IMR-90 (cell line): ENCODE measurements at regions of chr1 and their contacts with region 1.

Region 1: GRCh38 chr1:110412576-110412975 is 5.1 kb upstream of the LAMTOR5 start:
- DNase-seq: peak; percentile 63
- ATAC-seq: peak; percentile 84
- H3K4me3 ChIP-seq: no peak overlapping the region
- H3K27ac ChIP-seq: no peak overlapping the region
- H3K4me1 ChIP-seq: peaks cover 2% of the 10 kb centered on the region; the same call in 1 of the 2 replicates
- H3K27me3 ChIP-seq: peaks cover 14% of the 10 kb centered on the region
- CTCF ChIP-seq: peak; percentile 75
- POLR2A ChIP-seq: no peak
- RAD21 ChIP-seq: peak; percentile 79

Region 2: DNA sequence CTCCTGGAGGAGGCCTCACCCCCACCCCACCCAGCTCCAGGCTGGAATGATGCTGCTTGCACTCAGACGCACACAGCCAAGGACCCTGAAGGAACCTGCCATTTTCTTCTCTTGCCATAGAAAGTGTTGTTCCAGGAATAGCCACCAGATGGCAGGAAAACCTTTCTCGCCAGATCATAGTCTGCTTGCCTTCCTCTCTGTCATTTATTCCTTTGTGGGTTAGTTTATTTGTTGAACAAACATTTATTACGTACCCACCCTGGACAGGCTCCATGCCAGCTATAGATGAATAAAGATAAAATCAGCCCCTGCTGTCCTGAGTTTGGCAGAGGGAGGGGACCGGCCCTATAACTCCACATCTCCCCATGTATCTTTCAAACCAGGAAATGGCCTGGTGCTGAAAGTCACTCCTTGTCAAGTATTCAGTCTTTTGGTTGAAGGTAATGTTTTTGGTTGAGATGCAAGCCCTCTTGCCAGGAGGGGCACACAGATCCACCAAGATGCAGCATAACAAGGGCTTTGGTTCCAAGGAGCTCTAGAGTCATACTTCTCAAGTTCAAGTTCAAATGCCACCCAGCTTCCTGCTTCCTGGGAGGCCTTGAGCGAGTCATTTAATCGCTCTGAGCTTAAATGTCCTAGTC is 209.4 kb before region 1 on chr1:
- CTCF ChIA-PET with region 1: interaction called, 7 read pairs
- POLR2A ChIA-PET with region 1: no interaction called
- dilution Hi-C with region 1: no loop called
- in situ Hi-C with region 1: loop called (anchors 10 kb)
- intact Hi-C with region 1: loop called (anchors 2 kb)
- DNase-seq: peak; percentile 66
- ATAC-seq: peak; percentile 86
- H3K4me3 ChIP-seq: no peak overlapping the region
- H3K27ac ChIP-seq: no peak overlapping the region
- H3K4me1 ChIP-seq: 0 out of 2 replicates have a peak, but pooled peaks cover 1% of the 10 kb centered on the region
- H3K27me3 ChIP-seq: no peaks in the 10 kb centered on the region; the same call in 1 of the 2 replicates
- CTCF ChIP-seq: peak; percentile 85
- POLR2A ChIP-seq: no peak
- RAD21 ChIP-seq: peak; percentile 87

Region 3: GRCh38 chr1:110209715-110210603 is 202.6 kb before region 1 on chr1 and contains the start of gene KCNC4:
- CTCF ChIA-PET with region 1: no interaction called
- POLR2A ChIA-PET with region 1: no interaction called
- dilution Hi-C with region 1: no loop called
- in situ Hi-C with region 1: loop called (anchors 10 kb)
- intact Hi-C with region 1: no loop called
- DNase-seq: peak; percentile 58
- ATAC-seq: peak; percentile 84
- H3K4me3 ChIP-seq: peak within 1 kb of the TSS; percentile 49
- H3K27ac ChIP-seq: peak within 1 kb of the TSS; percentile 22; the same call in 1 of the 2 replicates
- H3K4me1 ChIP-seq: no peaks in the 10 kb centered on the region
- H3K27me3 ChIP-seq: peaks cover 51% of the 10 kb centered on the region
- CTCF ChIP-seq: no peak
- POLR2A ChIP-seq: no peak
- RAD21 ChIP-seq: no peak
- total RNA-seq, gene KCNC4: 0.18 and 0.28 TPM in 2 replicates

Region 4: DNA sequence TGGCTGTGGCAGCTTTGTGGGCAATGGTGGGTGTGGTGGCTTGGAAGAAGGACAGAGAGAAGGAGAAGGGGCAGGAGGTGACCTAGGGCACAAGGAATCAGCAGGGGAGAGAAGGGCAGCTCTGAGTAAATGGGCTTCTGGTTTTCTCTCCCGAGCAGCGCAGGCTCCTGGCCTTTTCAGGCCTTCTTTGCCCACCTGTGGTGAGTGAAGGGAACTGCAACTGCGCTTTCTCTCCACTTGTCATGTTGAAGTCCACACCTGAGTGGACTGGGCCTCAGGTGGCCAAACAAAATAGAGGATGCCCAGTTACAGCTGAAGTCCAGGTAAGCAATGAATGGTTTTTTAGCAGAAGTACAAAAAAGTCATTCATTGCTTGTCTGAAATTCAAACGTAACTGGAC is 135.8 kb after region 1 on chr1:
- CTCF ChIA-PET with region 1: no interaction called
- POLR2A ChIA-PET with region 1: no interaction called
- dilution Hi-C with region 1: no loop called
- in situ Hi-C with region 1: no loop called
- intact Hi-C with region 1: no loop called
- DNase-seq: peak; percentile 8
- ATAC-seq: peak; percentile 49
- H3K4me3 ChIP-seq: no peak overlapping the region
- H3K27ac ChIP-seq: no peak overlapping the region
- H3K4me1 ChIP-seq: no peaks in the 10 kb centered on the region
- H3K27me3 ChIP-seq: peaks cover 17% of the 10 kb centered on the region
- CTCF ChIP-seq: peak; percentile 30; the same call in 1 of the 2 replicates
- POLR2A ChIP-seq: no peak
- RAD21 ChIP-seq: no peak

Region 5: GRCh38 chr1:110615548-110616492 is 203.2 kb after region 1 on chr1:
- CTCF ChIA-PET with region 1: no interaction called
- POLR2A ChIA-PET with region 1: no interaction called
- dilution Hi-C with region 1: no loop called
- in situ Hi-C with region 1: no loop called
- intact Hi-C with region 1: no loop called
- DNase-seq: peak; percentile 51
- ATAC-seq: peak; percentile 60
- H3K4me3 ChIP-seq: no peak overlapping the region
- H3K27ac ChIP-seq: no peak overlapping the region
- H3K4me1 ChIP-seq: no peaks in the 10 kb centered on the region
- H3K27me3 ChIP-seq: peaks cover 30% of the 10 kb centered on the region
- CTCF ChIP-seq: peak; percentile 66
- POLR2A ChIP-seq: no peak
- RAD21 ChIP-seq: peak; percentile 68

Region 6: DNA sequence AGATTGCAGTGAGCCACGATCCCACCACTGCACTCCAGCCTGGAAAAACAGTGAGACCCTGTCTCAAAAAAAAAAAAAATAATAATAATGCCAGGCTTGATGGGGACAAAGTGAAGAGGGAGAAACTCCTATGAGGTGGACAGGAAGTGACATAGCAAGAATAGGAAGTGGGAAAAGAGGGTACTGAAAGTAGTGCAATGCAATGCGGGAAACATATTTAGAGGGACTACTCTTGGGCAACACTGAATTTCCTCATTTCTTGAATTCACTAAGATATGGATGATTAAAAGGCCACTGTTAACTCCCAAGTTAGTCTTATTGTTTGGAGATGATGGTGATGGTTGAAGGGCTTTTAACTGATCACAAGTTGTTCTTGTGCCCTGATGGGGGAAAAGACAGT is 215.2 kb after region 1 on chr1:
- CTCF ChIA-PET with region 1: no interaction called
- POLR2A ChIA-PET with region 1: no interaction called
- dilution Hi-C with region 1: no loop called
- in situ Hi-C with region 1: no loop called
- intact Hi-C with region 1: no loop called
- DNase-seq: no peak
- ATAC-seq: no peak
- H3K4me3 ChIP-seq: no peak overlapping the region
- H3K27ac ChIP-seq: no peak overlapping the region
- H3K4me1 ChIP-seq: no peaks in the 10 kb centered on the region
- H3K27me3 ChIP-seq: peaks cover 8% of the 10 kb centered on the region
- CTCF ChIP-seq: no peak
- POLR2A ChIP-seq: no peak
- RAD21 ChIP-seq: no peak